ENCODE measurements at regions of chr5 and their contacts with region 1.

Region 1: GRCh38 chr5:44774279-44774880 is 34.4 kb upstream of the MRPS30 start:
- DNase-seq: no peak
- ATAC-seq: no peak

Region 2: GRCh38 chr5:44536650-44537260 is 237.6 kb before region 1 on chr5:
- intact Hi-C with region 1: loop called (anchors 5 kb)
- DNase-seq: no peak
- ATAC-seq: no peak

Measured in Right ventricle myocardium superior (tissue), 1 donor.